ENCODE measurements at regions of chr3 and their contacts with region 1.

Region 1: DNA sequence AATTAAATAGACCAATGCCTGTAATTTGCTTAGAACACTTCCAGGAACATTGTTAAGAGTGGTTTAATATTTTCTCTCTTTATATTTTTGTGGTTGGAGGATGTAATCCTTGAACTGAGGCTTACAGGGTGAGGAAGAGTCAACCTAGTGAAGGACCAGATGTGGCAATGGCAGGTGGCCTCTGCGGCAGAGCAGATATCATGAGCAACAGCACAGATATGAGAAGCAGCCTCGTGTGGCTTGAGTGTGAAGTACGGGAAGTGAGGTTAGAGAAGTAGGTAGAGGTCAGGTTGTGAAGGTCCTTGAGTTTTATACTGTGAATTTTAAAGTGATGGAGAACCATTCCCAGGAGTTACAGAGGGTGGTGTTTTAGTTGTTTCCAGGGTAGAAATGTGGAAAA is 417.6 kb upstream of the SUCLG2 start:
- DNase-seq: no peak
- H3K4me3 ChIP-seq: no peak overlapping the region
- H3K27ac ChIP-seq: no peak overlapping the region
- H3K4me1 ChIP-seq: no peaks in the 10 kb centered on the region
- H3K27me3 ChIP-seq: no peaks in the 10 kb centered on the region
- CTCF ChIP-seq: no peak
- EP300 ChIP-seq: no peak
- POLR2A ChIP-seq: no peak

Region 2: GRCh38 chr3:68103811-68104210 is 31.7 kb after region 1 on chr3:
- intact Hi-C with region 1: loop called in 1 of 4 experiments (anchors 2 kb)
- DNase-seq: no peak
- H3K4me3 ChIP-seq: no peak overlapping the region
- H3K27ac ChIP-seq: no peak overlapping the region
- H3K4me1 ChIP-seq: no peaks in the 10 kb centered on the region
- H3K27me3 ChIP-seq: no peaks in the 10 kb centered on the region
- CTCF ChIP-seq: no peak
- EP300 ChIP-seq: no peak
- POLR2A ChIP-seq: no peak